CD4-positive, alpha-beta memory T cell (primary cell): ENCODE measurements at regions of chr6 and their contacts with region 1.

Region 1: GRCh38 chr6:35327349-35328027 is 14.9 kb upstream of the PPARD start:
- DNase-seq: peak; percentile 72 to 82 (median 74)
- H3K4me3 ChIP-seq: no peak overlapping the region
- H3K4me3 Mint-ChIP-seq: peak overlapping the region in 5 of 8 donors; percentile 15 to 62 (median 44)
- H3K27ac ChIP-seq: no peak overlapping the region
- H3K27ac Mint-ChIP-seq: peak overlapping the region; percentile 19 to 95 (median 82)
- H3K4me1 ChIP-seq: peaks cover 24% of the 10 kb centered on the region
- H3K4me1 Mint-ChIP-seq: peaks cover 16 to 25% (median 20%) of the 10 kb centered on the region in 4 donors
- H3K27me3 ChIP-seq: no peaks in the 10 kb centered on the region
- H3K27me3 Mint-ChIP-seq: no peaks in the 10 kb centered on the region

Region 2: DNA sequence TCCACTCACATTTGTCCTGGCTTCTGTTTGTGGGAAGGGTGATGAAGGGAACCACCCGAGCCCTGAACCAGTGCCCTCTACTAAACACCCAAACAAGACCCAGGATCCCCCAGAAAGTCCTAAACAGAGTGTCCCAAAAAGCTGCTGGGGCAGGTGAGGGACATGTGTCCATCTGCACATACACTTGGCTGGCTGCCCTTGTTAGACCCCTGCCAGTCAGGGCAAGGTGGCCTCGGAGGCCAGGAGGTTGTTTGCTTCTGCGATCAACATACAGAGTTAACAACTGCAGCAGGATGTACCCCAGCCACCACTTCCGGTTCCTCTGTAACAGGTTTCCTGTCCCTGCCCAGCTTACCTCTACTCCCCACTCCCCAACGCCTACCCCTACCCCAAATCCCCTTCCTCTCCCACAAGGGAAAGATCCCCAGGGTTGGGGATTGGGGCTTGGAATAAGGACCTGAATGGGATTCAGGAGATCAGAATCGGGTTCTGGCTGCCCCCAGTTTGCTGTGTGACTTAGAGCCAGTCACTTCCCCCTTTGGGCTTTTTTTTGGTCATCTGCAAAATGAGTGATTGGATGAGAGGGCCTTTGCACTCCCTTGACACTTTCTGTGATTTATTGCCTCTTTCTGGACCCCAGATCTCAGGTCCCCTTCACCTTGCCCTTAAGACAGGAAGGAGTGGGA is 16.0 kb before region 1 on chr6:
- CTCF ChIA-PET with region 1: interaction called, 109 read pairs
- POLR2A ChIA-PET with region 1: interaction called, 805 read pairs
- intact Hi-C with region 1: loop called (anchors 2 kb)
- DNase-seq: peak; percentile 50 to 77 (median 65)
- H3K4me3 ChIP-seq: peak overlapping the region; percentile 50
- H3K4me3 Mint-ChIP-seq: peak overlapping the region; percentile 83 to 92 (median 85)
- H3K27ac ChIP-seq: peak overlapping the region; percentile 78
- H3K27ac Mint-ChIP-seq: peak overlapping the region; percentile 96 to 99 (median 98)
- H3K4me1 ChIP-seq: peaks cover 93% of the 10 kb centered on the region
- H3K4me1 Mint-ChIP-seq: peaks cover 65 to 98% (median 87%) of the 10 kb centered on the region in 4 donors
- H3K27me3 ChIP-seq: no peaks in the 10 kb centered on the region
- H3K27me3 Mint-ChIP-seq: no peaks in the 10 kb centered on the region

Region 3: DNA sequence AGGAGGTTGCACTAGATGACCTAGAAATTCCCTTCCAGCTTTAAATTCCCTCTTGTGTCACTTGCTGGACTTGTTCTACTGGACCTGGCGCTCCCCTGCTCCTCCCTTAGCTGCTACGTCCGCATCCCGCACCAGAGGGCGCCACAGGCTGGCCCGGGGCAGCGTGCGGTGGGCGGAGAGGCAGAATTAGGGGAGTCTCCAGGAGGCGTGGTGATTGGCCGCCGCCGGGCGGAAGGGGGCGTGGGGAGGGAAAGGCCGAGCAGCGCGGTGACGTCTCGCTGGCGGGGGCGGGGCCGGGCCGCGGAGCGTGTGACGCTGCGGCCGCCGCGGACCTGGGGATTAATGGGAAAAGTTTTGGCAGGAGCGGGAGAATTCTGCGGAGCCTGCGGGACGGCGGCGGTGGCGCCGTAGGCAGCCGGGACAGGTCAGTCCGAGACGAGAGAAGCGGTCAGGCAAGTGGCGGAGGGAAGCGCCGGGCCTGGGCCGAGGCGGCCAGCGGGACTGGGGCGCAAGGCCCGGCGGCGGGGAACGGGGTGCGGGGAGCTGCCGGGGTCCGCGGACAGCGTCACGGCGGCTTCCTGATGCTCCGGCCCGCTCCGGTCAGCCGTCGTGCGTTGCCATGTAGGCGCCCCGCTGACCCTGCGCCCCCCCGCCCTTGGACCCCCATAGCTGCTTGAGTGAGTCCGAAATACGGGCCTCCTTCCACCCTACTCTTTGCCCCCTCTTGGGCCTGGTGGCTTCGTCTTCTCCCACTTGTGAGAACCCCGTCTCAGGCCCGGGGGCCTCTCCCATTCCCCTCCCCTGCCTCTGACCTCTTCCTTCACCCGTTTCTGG is 15.0 kb after region 1 on chr6 and contains the start of gene PPARD:
- CTCF ChIA-PET with region 1: interaction called, 23 read pairs
- POLR2A ChIA-PET with region 1: interaction called, 8 read pairs
- intact Hi-C with region 1: loop called (anchors 1 kb)
- DNase-seq: peak; percentile 94 to 98 (median 95)
- H3K4me3 ChIP-seq: peak within 1 kb of the TSS; percentile 50 to 97
- H3K4me3 Mint-ChIP-seq: peak within 1 kb of the TSS; percentile 87 to 99 (median 96)
- H3K27ac ChIP-seq: peak within 1 kb of the TSS; percentile 86
- H3K27ac Mint-ChIP-seq: peak within 1 kb of the TSS; percentile 87 to 99 (median 96)
- H3K4me1 ChIP-seq: peaks cover 52% of the 10 kb centered on the region
- H3K4me1 Mint-ChIP-seq: peaks cover 37 to 60% (median 51%) of the 10 kb centered on the region in 4 donors
- H3K27me3 ChIP-seq: no peaks in the 10 kb centered on the region
- H3K27me3 Mint-ChIP-seq: no peaks in the 10 kb centered on the region
- total RNA-seq, gene PPARD: 37.2 to 38.7 TPM

Region 4: DNA sequence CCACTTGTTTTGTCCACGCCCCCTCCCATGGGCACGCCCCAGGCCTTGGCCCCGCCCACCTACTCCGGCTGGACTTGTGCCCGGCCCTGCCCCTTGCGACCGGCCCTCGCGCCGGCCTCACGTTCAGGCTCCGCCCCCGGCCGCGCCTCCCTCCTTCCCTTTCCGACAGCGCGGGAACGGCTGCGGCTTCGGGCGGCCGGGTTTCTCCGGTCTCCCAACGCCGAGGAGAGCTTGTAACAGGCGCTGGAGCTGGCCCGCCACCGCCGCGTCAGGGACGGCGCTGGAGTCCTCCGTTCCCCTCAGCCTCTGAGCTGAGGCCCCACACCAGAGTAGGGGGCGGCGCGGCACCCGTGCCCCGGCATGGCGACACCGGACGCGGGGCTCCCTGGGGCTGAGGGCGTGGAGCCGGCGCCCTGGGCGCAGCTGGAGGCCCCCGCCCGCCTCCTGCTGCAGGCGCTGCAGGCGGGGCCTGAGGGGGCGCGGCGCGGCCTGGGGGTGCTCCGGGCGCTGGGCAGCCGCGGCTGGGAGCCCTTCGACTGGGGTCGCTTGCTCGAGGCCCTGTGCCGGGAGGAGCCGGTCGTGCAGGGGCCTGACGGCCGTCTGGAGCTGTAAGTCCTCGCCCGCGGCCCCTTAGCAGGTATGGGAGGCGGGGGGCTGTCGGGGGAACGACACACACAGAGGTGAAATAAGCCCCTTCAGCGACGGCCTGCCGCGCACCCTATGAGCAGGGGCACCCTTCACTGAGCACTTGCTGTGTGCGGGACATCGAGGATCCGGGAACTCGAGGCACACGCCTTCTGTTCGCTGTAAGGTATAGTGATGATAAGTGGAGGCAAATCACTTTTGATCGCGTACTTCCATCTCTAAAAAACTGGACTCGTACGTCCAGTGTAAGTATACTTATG is 125.0 kb after region 1 on chr6 and contains the start of gene FANCE:
- CTCF ChIA-PET with region 1: interaction called, 90 read pairs
- POLR2A ChIA-PET with region 1: interaction called, 8 read pairs
- intact Hi-C with region 1: loop called (anchors 1 kb)
- DNase-seq: peak; percentile 77 to 90 (median 81)
- H3K4me3 ChIP-seq: peak within 1 kb of the TSS; percentile 0 to 66
- H3K4me3 Mint-ChIP-seq: peak within 1 kb of the TSS; percentile 84 to 91 (median 87)
- H3K27ac ChIP-seq: peak within 1 kb of the TSS; percentile 59
- H3K27ac Mint-ChIP-seq: peak within 1 kb of the TSS; percentile 54 to 94 (median 89)
- H3K4me1 ChIP-seq: peaks cover 40% of the 10 kb centered on the region
- H3K4me1 Mint-ChIP-seq: peaks cover 29 to 53% (median 39%) of the 10 kb centered on the region in 4 donors
- H3K27me3 ChIP-seq: no peaks in the 10 kb centered on the region
- H3K27me3 Mint-ChIP-seq: no peaks in the 10 kb centered on the region
- total RNA-seq, gene FANCE: 8.9 to 9.0 TPM